ENCODE measurements at regions of chr21 and their contacts with region 1.

Region 1: DNA sequence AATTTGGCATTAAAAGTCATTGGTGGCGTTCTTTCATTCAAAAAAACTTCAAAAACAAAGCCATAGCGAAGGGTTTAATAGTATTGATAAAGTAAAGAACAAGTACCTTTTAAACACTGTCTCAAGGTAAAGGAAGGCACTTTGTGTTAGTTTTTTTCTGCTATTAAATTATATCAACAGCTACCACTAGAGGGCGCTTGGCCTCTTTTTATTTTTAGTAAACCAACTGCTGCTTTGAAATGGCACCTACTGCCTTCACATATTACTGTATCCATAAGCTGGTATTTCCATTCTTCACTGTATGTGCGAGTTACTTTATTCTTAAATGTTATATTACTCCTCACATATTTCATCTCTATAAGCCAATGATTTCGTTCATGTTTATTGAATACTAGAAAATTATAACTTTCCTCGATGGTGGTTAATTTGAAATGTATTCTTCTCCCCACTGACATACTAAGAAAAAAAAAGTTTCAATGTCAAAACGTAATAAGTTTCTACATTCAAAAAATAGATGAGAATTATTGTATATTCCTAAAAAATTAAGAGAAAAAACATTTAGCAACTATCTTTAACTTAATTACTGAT is 125.7 kb upstream of the CXADR start:
- DNase-seq: no peak
- ATAC-seq: peak; percentile 43

Region 2: DNA sequence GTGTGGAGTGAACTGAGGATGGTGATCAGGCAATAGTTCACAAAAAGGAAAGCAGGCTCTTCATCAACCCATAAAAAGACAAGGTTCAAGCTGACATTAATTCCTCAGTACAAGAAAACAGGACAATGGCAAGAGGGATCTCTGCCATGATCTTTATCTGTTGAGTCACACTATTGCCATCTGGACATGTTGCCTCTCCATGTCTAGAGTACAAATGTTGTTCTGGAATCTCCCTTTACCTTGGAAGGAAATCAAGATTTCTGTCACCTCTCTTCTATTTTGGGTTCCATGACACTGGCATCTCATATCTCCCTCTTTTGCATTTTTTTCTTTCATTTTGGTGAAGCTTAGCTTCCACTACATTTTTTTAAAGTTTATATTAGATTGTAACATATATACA is 1328.2 kb before region 1 on chr21:
- intact Hi-C with region 1: no loop called
- DNase-seq: no peak
- ATAC-seq: no peak

Region 3: GRCh38 chr21:17585875-17586450 is 198.8 kb after region 1 on chr21:
- intact Hi-C with region 1: loop called (anchors 2 kb)
- DNase-seq: no peak
- ATAC-seq: no peak